Activated CD4-positive, alpha-beta T cell treated with anti-CD3 and anti-CD28 coated beads for 36 hours (primary cell): ENCODE measurements at regions of chr10 and their contacts with region 1.

Region 1: DNA sequence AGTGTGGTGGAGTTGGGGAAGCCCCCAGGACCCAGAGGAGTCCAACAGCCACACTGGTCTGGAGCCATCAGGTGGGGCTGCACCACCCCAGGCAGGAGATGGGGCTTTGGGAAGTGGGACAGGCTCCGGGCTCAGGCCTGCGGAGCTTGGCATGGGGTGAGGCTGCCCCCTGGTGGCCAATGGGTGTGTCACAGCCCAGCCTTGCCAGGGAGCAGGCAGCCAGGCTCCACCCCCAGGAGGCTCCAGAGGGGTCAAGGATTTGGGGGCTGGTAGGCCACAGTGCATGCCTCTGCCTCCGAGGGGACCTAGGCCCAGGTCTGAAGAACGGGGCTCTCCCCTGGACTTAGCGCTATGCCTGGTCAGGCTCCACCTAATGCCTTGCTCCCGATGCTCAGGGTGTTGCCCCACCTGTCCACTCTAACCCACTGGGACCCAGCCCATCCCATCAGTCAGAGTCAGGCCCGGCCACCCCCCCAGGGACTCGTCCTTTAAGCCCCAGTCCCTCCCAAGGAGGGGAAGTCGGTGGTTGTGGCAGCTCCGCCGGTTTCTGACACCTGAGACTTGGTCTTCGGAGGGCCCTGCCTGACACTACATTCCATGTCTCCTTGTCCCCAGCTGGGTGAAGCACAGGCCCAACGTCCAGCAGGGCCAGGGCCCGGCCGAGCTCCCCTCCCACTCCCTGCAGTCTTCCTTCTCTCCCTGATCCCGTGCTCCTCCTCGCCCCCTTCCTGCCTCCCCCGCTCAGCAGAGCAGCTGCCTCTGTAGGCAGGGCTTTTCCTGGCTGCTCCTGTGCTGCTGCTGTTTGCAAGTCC is 11.3 kb upstream of the SAMD8 start:
- DNase-seq: peak; percentile 90
- ATAC-seq: peak; percentile 97
- H3K4me3 Mint-ChIP-seq: no peak overlapping the region
- H3K27ac Mint-ChIP-seq: no peak overlapping the region
- H3K4me1 Mint-ChIP-seq: no peaks in the 10 kb centered on the region
- H3K27me3 Mint-ChIP-seq: no peaks in the 10 kb centered on the region

Region 2: DNA sequence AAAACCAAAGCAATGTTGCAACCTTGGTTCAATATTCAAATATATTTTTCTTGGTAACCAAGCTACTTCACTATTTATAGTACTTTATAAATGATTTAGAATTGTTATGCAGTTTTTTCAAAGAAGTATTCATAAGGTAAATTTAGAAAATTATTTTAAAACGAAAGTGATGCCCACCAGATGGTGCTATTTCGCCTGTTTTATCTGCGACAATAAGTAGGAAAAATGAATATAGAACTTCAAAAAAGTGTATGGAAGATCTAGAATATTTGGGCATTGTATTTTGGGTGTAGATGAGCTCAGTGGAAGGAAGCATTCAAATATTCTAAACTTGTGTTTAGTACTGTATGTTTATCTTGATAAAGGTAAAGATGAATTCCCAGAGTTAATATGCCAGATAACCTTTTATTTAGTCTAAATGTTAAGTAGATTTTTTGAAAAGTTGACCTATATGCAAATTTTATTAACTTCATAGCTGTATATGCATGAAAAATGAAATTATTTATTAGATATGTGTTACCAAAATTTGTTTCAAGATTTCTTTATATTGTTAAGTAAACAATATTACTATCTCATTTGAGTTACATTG is 856.0 kb before region 1 on chr10:
- CTCF ChIA-PET with region 1: interaction called, 13 read pairs
- POLR2A ChIA-PET with region 1: no interaction called
- intact Hi-C with region 1: loop called in 1 of 2 experiments (anchors 1 kb)
- DNase-seq: peak; percentile 35
- ATAC-seq: no peak
- H3K4me3 Mint-ChIP-seq: no peak overlapping the region
- H3K27ac Mint-ChIP-seq: no peak overlapping the region
- H3K4me1 Mint-ChIP-seq: no peaks in the 10 kb centered on the region
- H3K27me3 Mint-ChIP-seq: no peaks in the 10 kb centered on the region

Region 3: GRCh38 chr10:74262856-74263255 is 837.3 kb before region 1 on chr10:
- CTCF ChIA-PET with region 1: no interaction called
- POLR2A ChIA-PET with region 1: no interaction called
- intact Hi-C with region 1: loop called (anchors 1 kb)
- DNase-seq: no peak
- ATAC-seq: no peak
- H3K4me3 Mint-ChIP-seq: no peak overlapping the region
- H3K27ac Mint-ChIP-seq: no peak overlapping the region
- H3K4me1 Mint-ChIP-seq: peaks cover 17% of the 10 kb centered on the region
- H3K27me3 Mint-ChIP-seq: no peaks in the 10 kb centered on the region

Region 4: GRCh38 chr10:74419958-74420375 is 680.2 kb before region 1 on chr10:
- CTCF ChIA-PET with region 1: interaction called, 3 read pairs
- POLR2A ChIA-PET with region 1: no interaction called
- intact Hi-C with region 1: loop called in 1 of 2 experiments (anchors 2 kb)
- DNase-seq: peak; percentile 48
- ATAC-seq: peak; percentile 53
- H3K4me3 Mint-ChIP-seq: no peak overlapping the region
- H3K27ac Mint-ChIP-seq: no peak overlapping the region
- H3K4me1 Mint-ChIP-seq: peaks cover 4% of the 10 kb centered on the region
- H3K27me3 Mint-ChIP-seq: no peaks in the 10 kb centered on the region

Region 5: GRCh38 chr10:74738985-74739567 is 361.1 kb before region 1 on chr10:
- CTCF ChIA-PET with region 1: interaction called, 6 read pairs
- POLR2A ChIA-PET with region 1: no interaction called
- intact Hi-C with region 1: loop called in 1 of 2 experiments (anchors 1 kb)
- DNase-seq: peak; percentile 32
- ATAC-seq: peak; percentile 65
- H3K4me3 Mint-ChIP-seq: no peak overlapping the region
- H3K27ac Mint-ChIP-seq: peak overlapping the region; percentile 76
- H3K4me1 Mint-ChIP-seq: peaks cover 15% of the 10 kb centered on the region
- H3K27me3 Mint-ChIP-seq: no peaks in the 10 kb centered on the region

Region 6: DNA sequence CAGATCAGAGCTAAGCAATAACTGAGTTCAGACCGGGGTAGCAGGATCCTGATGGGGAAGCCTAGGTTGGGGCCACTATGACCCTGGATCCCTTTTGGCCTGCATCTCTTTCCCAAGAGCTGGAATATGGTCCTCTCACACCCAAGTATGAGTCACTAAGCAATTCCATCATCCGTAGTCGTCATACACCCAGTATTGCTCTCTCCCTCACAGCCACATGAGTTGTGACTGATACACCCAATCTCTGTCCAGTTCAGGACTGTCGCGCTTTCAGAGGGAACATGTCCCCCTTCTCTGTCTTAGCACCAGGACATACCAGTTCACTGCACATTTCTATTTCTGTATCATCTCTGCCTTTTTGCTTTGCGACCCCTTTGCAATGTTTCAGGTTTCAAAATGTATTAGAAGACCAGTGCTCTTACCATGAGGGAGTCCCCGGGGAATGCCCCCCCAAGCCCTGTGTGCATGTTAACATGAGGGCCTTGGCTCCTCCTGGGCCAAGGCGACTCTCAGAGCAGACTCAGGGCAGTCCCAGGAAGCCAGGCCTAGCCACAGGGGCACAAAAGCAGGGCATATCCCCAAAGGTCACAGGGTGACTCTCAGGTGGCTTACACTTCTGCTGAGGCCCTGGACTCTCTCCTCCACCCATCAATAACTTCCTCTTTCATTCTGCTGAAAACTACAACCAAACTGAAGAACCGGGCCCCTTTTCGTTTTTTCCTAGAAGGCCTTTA is 64.0 kb before region 1 on chr10:
- CTCF ChIA-PET with region 1: no interaction called
- POLR2A ChIA-PET with region 1: no interaction called
- intact Hi-C with region 1: no loop called
- DNase-seq: peak; percentile 55
- ATAC-seq: peak; percentile 43
- H3K4me3 Mint-ChIP-seq: no peak overlapping the region
- H3K27ac Mint-ChIP-seq: peak overlapping the region; percentile 82
- H3K4me1 Mint-ChIP-seq: peaks cover 64% of the 10 kb centered on the region
- H3K27me3 Mint-ChIP-seq: no peaks in the 10 kb centered on the region

Region 7: GRCh38 chr10:75335983-75336382 is 235.8 kb after region 1 on chr10:
- CTCF ChIA-PET with region 1: no interaction called
- POLR2A ChIA-PET with region 1: no interaction called
- intact Hi-C with region 1: no loop called
- DNase-seq: no peak
- ATAC-seq: no peak
- H3K4me3 Mint-ChIP-seq: no peak overlapping the region
- H3K27ac Mint-ChIP-seq: no peak overlapping the region
- H3K4me1 Mint-ChIP-seq: no peaks in the 10 kb centered on the region
- H3K27me3 Mint-ChIP-seq: peaks cover 11% of the 10 kb centered on the region